ENCODE measurements at regions of chr2 and their contacts with region 1.

Region 1: GRCh38 chr2:135876066-135876711 is at the start of gene MCM6:
- DNase-seq: peak; percentile 100
- ATAC-seq: peak; percentile 91
- H3K4me3 Mint-ChIP-seq: peak within 1 kb of the TSS; percentile 82
- H3K27ac Mint-ChIP-seq: peak within 1 kb of the TSS; percentile 99
- H3K4me1 Mint-ChIP-seq: peaks cover 37% of the 10 kb centered on the region
- H3K27me3 Mint-ChIP-seq: no peaks in the 10 kb centered on the region
- CTCF ChIP-seq: no peak
- total RNA-seq, gene MCM6: 229 to 234 TPM

Region 2: DNA sequence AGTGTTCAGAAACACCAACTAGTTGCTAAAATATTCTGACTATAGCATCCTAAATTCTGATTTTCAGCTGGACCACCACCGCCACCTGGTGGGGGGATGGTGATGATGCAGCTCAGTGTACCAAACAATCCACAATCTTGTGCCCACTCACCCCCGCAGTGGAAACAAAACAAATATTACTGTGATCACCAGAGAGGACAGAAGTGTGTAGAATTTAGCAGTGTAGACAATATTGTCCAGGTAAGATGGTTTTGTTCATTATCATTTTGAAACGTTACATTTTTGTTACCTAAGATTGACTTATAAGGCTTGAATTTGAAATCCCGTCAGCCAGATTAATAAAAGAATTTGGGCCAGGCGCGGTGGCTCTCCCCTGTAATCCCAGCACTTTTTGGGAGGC is 166.2 kb before region 1 on chr2:
- CTCF ChIA-PET with region 1: no interaction called
- POLR2A ChIA-PET with region 1: no interaction called
- intact Hi-C with region 1: no loop called
- DNase-seq: peak; percentile 83
- ATAC-seq: peak; percentile 89
- H3K4me3 Mint-ChIP-seq: no peak overlapping the region
- H3K27ac Mint-ChIP-seq: no peak overlapping the region
- H3K4me1 Mint-ChIP-seq: peaks cover 2% of the 10 kb centered on the region
- H3K27me3 Mint-ChIP-seq: no peaks in the 10 kb centered on the region
- CTCF ChIP-seq: peak; percentile 97

Region 3: GRCh38 chr2:135820003-135820618 is 56.1 kb before region 1 on chr2:
- CTCF ChIA-PET with region 1: no interaction called
- POLR2A ChIA-PET with region 1: interaction called, 15 read pairs
- intact Hi-C with region 1: no loop called
- DNase-seq: peak; percentile 98
- ATAC-seq: peak; percentile 93
- H3K4me3 Mint-ChIP-seq: peak overlapping the region; percentile 68
- H3K27ac Mint-ChIP-seq: peak overlapping the region; percentile 91
- H3K4me1 Mint-ChIP-seq: peaks cover 56% of the 10 kb centered on the region
- H3K27me3 Mint-ChIP-seq: no peaks in the 10 kb centered on the region
- CTCF ChIP-seq: no peak

Region 4: GRCh38 chr2:135839713-135840112 is 36.5 kb before region 1 on chr2:
- CTCF ChIA-PET with region 1: no interaction called
- POLR2A ChIA-PET with region 1: interaction called, 10 read pairs
- intact Hi-C with region 1: no loop called
- DNase-seq: no peak
- ATAC-seq: peak; percentile 32
- H3K4me3 Mint-ChIP-seq: no peak overlapping the region
- H3K27ac Mint-ChIP-seq: no peak overlapping the region
- H3K4me1 Mint-ChIP-seq: peaks cover 35% of the 10 kb centered on the region
- H3K27me3 Mint-ChIP-seq: no peaks in the 10 kb centered on the region
- CTCF ChIP-seq: no peak

Region 5: GRCh38 chr2:135851858-135852257 is 24.3 kb before region 1 on chr2:
- CTCF ChIA-PET with region 1: no interaction called
- POLR2A ChIA-PET with region 1: interaction called, 11 read pairs
- intact Hi-C with region 1: no loop called
- DNase-seq: no peak
- ATAC-seq: no peak
- H3K4me3 Mint-ChIP-seq: no peak overlapping the region
- H3K27ac Mint-ChIP-seq: no peak overlapping the region
- H3K4me1 Mint-ChIP-seq: no peaks in the 10 kb centered on the region
- H3K27me3 Mint-ChIP-seq: no peaks in the 10 kb centered on the region
- CTCF ChIP-seq: no peak

Region 6: GRCh38 chr2:135942936-135943688 is 66.9 kb after region 1 on chr2:
- CTCF ChIA-PET with region 1: no interaction called
- POLR2A ChIA-PET with region 1: no interaction called
- intact Hi-C with region 1: no loop called
- DNase-seq: no peak
- ATAC-seq: no peak
- H3K4me3 Mint-ChIP-seq: no peak overlapping the region
- H3K27ac Mint-ChIP-seq: no peak overlapping the region
- H3K4me1 Mint-ChIP-seq: peaks cover 42% of the 10 kb centered on the region
- H3K27me3 Mint-ChIP-seq: no peaks in the 10 kb centered on the region
- CTCF ChIP-seq: no peak

Region 7: GRCh38 chr2:136034629-136035028 is 158.4 kb after region 1 on chr2:
- CTCF ChIA-PET with region 1: no interaction called
- POLR2A ChIA-PET with region 1: no interaction called
- intact Hi-C with region 1: no loop called
- DNase-seq: peak; percentile 33
- ATAC-seq: peak; percentile 69
- H3K4me3 Mint-ChIP-seq: no peak overlapping the region
- H3K27ac Mint-ChIP-seq: no peak overlapping the region
- H3K4me1 Mint-ChIP-seq: peaks cover 5% of the 10 kb centered on the region
- H3K27me3 Mint-ChIP-seq: no peaks in the 10 kb centered on the region
- CTCF ChIP-seq: no peak